CD14-positive monocyte (primary cell): ENCODE measurements at regions of chr13 and their contacts with region 1.

Region 1: DNA sequence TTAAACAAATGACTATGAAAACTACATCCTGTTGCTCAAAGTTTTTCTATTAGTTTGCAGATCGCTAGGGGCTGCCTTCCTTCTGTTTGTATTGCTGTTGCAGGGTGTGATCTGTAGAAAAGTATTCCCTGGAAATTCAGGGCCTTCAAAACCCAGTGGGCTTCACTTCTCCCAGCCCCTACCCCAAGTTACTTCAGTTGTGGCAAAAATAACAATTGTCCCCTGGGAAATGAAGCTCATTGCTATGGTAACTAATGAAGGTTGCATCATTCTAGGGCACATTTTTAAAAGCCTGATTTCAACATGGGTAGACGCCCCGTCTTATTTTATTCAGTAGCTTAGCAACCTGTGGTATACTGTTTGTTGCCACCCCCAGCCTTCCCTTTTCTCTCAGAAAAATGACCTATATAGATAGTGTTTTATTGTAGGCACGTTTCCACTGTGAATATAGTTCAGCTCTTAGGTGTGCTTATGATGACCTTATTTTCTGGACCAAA is 60.9 kb downstream of the WDFY2 start:
- DNase-seq: peak; percentile 87 to 97 (median 88)
- H3K4me3 ChIP-seq: peak overlapping the region in 2 of 3 experiments; percentile 47 to 67
- H3K4me3 Mint-ChIP-seq: peak overlapping the region; percentile 64 to 85
- H3K27ac ChIP-seq: peak overlapping the region; percentile 58 to 98
- H3K27ac Mint-ChIP-seq: peak overlapping the region; percentile 97 to 100 (median 99)
- H3K4me1 ChIP-seq: peaks cover 41 to 47% of the 10 kb centered on the region in 2 donors
- H3K4me1 Mint-ChIP-seq: peaks cover 62% of the 10 kb centered on the region
- H3K27me3 ChIP-seq: no peaks in the 10 kb centered on the region
- H3K27me3 Mint-ChIP-seq: no peaks in the 10 kb centered on the region
- CTCF ChIP-seq: no peak

Region 2: GRCh38 chr13:51583875-51584730 is 61.1 kb before region 1 on chr13 and contains the start of gene WDFY2:
- intact Hi-C with region 1: loop called (anchors 2 kb)
- DNase-seq: peak; percentile 99 to 100 (median 100)
- H3K4me3 ChIP-seq: peak within 1 kb of the TSS; percentile 85 to 96 (median 91)
- H3K4me3 Mint-ChIP-seq: peak within 1 kb of the TSS; percentile 96 to 98
- H3K27ac ChIP-seq: peak within 1 kb of the TSS; percentile 85 to 89
- H3K27ac Mint-ChIP-seq: peak within 1 kb of the TSS; percentile 94 to 99 (median 99)
- H3K4me1 ChIP-seq: peaks cover 32 to 57% of the 10 kb centered on the region in 2 donors
- H3K4me1 Mint-ChIP-seq: peaks cover 51% of the 10 kb centered on the region
- H3K27me3 ChIP-seq: no peaks in the 10 kb centered on the region
- H3K27me3 Mint-ChIP-seq: peaks cover 0 to 5% (median 0%) of the 10 kb centered on the region in 3 donors
- CTCF ChIP-seq: no peak
- polyA plus RNA-seq, gene WDFY2: 6.5 to 40.1 (median 9.1) TPM

Region 3: DNA sequence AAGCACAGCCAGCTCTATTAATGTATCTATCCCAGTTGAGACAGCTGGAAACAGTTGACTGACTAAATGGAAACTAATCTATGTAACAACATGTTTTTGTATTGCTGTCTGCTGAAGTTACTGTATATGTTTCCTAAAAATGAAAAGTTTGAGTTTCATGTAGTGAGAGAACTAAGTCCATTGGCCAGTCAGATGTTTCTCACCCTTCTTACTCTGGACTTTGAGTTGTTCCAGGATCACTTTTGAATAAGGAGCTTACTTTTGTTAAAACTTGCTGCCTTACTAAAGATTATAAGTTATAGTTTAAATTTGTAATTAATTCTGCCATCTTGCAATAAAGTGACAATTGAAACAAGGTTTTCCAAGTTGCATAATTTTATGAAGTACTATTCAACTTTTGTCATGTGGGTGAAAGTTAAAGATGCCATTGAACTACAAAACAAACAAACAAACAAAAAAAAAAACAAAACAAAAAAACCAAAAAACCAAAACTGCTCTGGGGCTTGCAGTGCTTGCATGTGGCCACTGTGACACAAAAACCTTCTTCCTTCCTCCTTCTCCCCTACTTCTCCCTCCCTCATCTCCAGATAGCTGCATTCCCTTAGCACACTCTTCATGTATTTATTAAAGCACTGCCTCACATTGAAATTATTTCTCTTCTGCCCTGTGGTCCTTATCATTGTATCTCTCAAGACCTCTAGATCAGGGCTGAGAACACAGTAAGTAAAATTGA is 45.6 kb before region 1 on chr13:
- intact Hi-C with region 1: loop called in 1 of 2 experiments (anchors 5 kb)
- DNase-seq: peak in 2 of 3 donors; percentile 27 to 32
- H3K4me3 ChIP-seq: peak overlapping the region in 1 of 3 experiments; percentile 28
- H3K4me3 Mint-ChIP-seq: peak overlapping the region in 1 of 2 donors; percentile 82
- H3K27ac ChIP-seq: peak overlapping the region in 1 of 2 donors; percentile 79
- H3K27ac Mint-ChIP-seq: peak overlapping the region; percentile 67 to 92 (median 84)
- H3K4me1 ChIP-seq: peaks cover 63 to 82% of the 10 kb centered on the region in 2 donors
- H3K4me1 Mint-ChIP-seq: peaks cover 77% of the 10 kb centered on the region
- H3K27me3 ChIP-seq: no peaks in the 10 kb centered on the region
- H3K27me3 Mint-ChIP-seq: no peaks in the 10 kb centered on the region
- CTCF ChIP-seq: peak; percentile 19